ENCODE measurements at regions of chr1 and their contacts with region 1.

Region 1: DNA sequence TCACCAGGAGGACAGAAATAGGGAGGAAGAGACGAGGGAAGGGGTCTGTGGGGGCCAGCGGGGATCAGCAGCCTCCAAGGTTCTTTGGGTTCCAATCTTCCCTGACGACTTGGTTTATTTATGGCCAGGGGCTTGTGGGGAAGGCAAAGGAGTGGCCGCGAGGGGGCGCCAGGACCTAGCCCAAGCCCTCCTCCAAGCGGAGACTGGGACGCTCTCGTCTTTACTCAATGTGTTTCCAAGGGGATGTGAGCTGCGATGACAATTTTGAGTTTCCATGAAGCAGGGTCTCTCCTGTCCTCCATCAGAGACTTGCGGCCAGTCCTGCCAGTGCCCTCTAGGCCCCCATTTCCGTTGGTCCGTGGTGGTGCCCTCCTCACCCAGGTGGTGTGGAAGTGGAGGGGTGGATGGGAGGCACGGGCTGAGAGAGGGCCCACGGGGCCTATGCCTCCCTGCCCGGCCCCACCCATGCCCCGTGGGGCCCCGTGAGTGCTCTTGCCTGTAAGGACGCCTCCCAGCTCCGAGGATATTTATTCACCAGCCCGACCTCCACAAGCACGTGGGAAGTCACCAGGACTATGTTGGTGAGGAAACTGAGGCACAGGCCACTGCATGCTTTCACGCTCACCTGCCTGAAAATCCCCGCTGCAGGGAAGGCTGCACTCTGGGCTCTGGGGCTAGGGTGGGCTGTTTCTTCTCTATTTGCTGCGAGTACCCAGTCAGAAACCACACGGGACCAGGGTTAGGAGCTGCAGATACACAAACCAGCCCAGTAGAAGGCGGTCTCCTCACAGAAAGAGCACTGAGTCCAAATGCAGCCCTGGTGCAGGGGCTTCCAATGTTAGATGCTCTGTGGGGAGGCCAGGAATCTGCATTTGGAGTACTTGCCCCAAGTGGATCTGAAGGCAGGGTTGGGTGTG is 26.5 kb downstream of the DMRTB1 start:
- DNase-seq: peak; percentile 81 to 95 (median 92)
- ATAC-seq: peak; percentile 79 to 81
- H3K4me3 ChIP-seq: no peak overlapping the region
- H3K27ac ChIP-seq: no peak overlapping the region
- H3K4me1 ChIP-seq: no peaks in the 10 kb centered on the region
- H3K27me3 ChIP-seq: no peaks in the 10 kb centered on the region

Region 2: GRCh38 chr1:53393325-53393792 is 92.4 kb before region 1 on chr1:
- intact Hi-C with region 1: no loop called
- DNase-seq: peak; percentile 78 to 90 (median 89)
- ATAC-seq: peak; percentile 82 to 89
- H3K4me3 ChIP-seq: no peak overlapping the region
- H3K27ac ChIP-seq: no peak overlapping the region
- H3K4me1 ChIP-seq: no peaks in the 10 kb centered on the region
- H3K27me3 ChIP-seq: no peaks in the 10 kb centered on the region

Region 3: DNA sequence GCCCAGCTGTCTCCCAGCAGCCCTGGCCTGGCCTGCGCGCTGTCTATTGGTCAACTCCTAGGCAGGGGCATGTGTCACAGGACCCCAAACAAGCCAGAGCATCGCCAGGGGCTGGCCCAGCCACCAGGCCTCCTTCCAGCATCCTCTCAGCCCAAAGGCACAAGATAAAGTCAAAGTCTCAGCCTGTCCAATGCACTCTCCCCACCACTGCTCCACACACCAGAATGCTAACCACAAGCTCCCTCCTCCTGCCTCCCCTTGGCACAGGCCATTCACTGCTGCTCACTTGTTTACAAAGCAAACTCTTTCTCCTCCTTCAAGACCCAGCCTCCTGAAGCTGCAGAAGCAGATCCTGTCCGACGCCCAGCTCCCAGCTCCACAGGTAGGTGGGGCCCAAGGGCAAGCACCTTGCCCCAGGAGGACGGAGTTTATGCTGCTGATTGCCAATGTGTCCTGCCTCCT is 106.8 kb after region 1 on chr1:
- intact Hi-C with region 1: loop called in 1 of 4 experiments (anchors 10 kb)
- DNase-seq: peak in 2 of 3 donors; percentile 81
- ATAC-seq: peak; percentile 46 to 75
- H3K4me3 ChIP-seq: no peak overlapping the region
- H3K27ac ChIP-seq: no peak overlapping the region
- H3K4me1 ChIP-seq: no peaks in the 10 kb centered on the region
- H3K27me3 ChIP-seq: no peaks in the 10 kb centered on the region

Region 4: GRCh38 chr1:53681977-53682685 is 196.4 kb after region 1 on chr1:
- intact Hi-C with region 1: loop called in 1 of 4 experiments (anchors 5 kb)
- DNase-seq: peak in 2 of 3 donors; percentile 68 to 69
- ATAC-seq: no peak
- H3K4me3 ChIP-seq: no peak overlapping the region
- H3K27ac ChIP-seq: no peak overlapping the region
- H3K4me1 ChIP-seq: no peaks in the 10 kb centered on the region
- H3K27me3 ChIP-seq: no peaks in the 10 kb centered on the region

Region 5: DNA sequence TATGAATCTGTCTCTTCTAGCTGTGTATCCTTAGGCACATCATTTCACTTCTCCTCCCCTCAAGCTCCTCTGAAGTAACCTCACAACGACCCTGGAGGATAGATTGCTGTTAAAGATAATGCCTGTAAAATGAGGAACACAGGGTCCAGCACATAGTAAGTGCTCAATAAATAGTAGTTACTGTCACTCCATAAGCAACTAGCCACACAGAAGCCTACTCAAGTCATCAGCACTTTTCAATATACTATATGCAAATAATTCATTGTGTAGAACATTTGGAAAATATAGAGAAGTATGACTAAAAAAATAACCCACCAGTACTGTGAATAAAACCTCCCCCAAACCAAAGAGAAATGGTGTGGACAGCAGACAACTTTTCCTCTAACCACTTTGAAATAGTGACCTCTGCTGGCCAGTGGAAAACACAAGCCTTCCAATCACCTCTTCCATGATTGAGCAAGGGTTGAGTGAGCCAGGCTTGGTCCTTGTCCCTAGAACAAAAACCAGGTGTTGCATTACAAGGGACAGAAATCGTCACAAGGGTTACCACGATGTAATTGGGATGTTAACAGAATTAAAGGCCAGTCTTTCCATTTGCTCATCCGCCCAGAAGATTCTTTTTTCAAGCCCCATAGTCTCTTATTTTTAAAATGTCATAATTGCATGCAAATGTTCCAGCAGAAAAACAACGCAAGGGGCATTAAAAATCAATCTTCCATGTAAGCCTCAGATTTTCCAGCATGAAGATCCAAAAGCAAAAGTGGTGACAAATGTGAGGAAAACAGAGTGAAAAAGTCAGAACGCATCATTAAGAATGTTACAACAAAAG is 269.0 kb after region 1 on chr1:
- intact Hi-C with region 1: loop called (anchors 2 to 5 kb)
- DNase-seq: peak in 1 of 3 donors; percentile 44
- ATAC-seq: peak in 1 of 2 donors; percentile 44
- H3K4me3 ChIP-seq: no peak overlapping the region
- H3K27ac ChIP-seq: no peak overlapping the region
- H3K4me1 ChIP-seq: no peaks in the 10 kb centered on the region
- H3K27me3 ChIP-seq: no peaks in the 10 kb centered on the region

Measured in right cardiac atrium (tissue), 5 donors.